Heart right ventricle (tissue), 16 donors: ENCODE measurements at regions of chr18 and their contacts with region 1.

Region 1: DNA sequence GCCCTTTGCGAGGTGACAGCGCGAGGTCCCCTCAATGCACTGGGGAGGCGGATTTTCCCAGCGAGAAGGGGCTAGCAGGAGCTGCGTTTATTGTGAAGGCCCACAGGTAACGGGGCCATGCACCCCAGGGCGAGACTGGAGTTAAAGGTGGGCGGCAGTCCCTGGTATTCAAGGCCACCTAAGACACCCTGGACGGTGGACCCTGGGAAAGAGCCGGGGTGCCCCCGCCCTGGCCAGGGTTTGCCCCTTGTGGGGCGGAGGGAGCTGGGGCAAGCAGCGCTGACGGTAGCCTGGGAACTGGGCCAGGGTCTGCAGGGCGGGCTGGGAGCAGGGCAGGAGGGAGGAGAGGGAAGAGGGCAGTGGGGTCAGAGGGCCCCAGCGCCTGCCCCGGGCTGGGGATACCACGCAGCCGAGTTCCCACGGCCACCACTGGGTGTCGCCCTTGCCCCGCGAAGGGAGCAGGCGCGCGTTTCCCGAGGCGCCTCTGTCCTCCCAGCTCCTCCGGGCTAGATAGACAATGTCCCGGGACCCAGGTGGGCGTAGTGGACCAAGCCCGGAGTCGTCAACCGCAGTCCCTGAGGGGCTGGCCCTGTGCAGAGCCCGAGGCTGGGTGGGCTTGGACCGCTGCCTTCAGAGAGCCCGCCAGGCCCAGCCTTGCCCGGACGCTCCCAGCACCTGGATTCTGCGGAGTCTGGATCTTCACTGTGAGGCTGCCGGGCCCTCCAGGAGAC is 80.2 kb downstream of the SMAD4 start:
- DNase-seq: peak; percentile 48 to 76
- ATAC-seq: peak; percentile 89 to 96 (median 94)
- H3K4me3 ChIP-seq: peak overlapping the region in 2 of 10 donors; percentile 8 to 21
- H3K27ac ChIP-seq: no peak overlapping the region
- H3K4me1 ChIP-seq: peaks cover 0 to 11% (median 4%) of the 10 kb centered on the region in 9 donors
- H3K27me3 ChIP-seq: no peaks in the 10 kb centered on the region
- CTCF ChIP-seq: peak; percentile 89 to 100 (median 95)

Region 2: GRCh38 chr18:51383116-51383515 is 272.9 kb after region 1 on chr18:
- intact Hi-C with region 1: loop called in 9 of 10 experiments (anchors 1 to 10 kb)
- DNase-seq: no peak
- ATAC-seq: no peak
- H3K4me3 ChIP-seq: no peak overlapping the region
- H3K27ac ChIP-seq: no peak overlapping the region
- H3K4me1 ChIP-seq: no peaks in the 10 kb centered on the region
- H3K27me3 ChIP-seq: no peaks in the 10 kb centered on the region
- CTCF ChIP-seq: no peak

Region 3: GRCh38 chr18:51390702-51391101 is 280.5 kb after region 1 on chr18:
- intact Hi-C with region 1: loop called in 4 of 10 experiments (anchors 2 to 10 kb)
- DNase-seq: no peak
- ATAC-seq: no peak
- H3K4me3 ChIP-seq: no peak overlapping the region
- H3K27ac ChIP-seq: no peak overlapping the region
- H3K4me1 ChIP-seq: no peaks in the 10 kb centered on the region
- H3K27me3 ChIP-seq: peaks cover 0 to 11% (median 0%) of the 10 kb centered on the region in 7 donors
- CTCF ChIP-seq: no peak

Region 4: GRCh38 chr18:51537487-51537886 is 427.2 kb after region 1 on chr18:
- intact Hi-C with region 1: loop called in 5 of 10 experiments (anchors 2 to 10 kb)
- DNase-seq: peak; percentile 17 to 36
- ATAC-seq: peak in 5 of 8 donors; percentile 75 to 88 (median 77)
- H3K4me3 ChIP-seq: no peak overlapping the region
- H3K27ac ChIP-seq: no peak overlapping the region
- H3K4me1 ChIP-seq: no peaks in the 10 kb centered on the region
- H3K27me3 ChIP-seq: no peaks in the 10 kb centered on the region
- CTCF ChIP-seq: peak in 7 of 9 donors; percentile 24 to 60 (median 43)

Region 5: DNA sequence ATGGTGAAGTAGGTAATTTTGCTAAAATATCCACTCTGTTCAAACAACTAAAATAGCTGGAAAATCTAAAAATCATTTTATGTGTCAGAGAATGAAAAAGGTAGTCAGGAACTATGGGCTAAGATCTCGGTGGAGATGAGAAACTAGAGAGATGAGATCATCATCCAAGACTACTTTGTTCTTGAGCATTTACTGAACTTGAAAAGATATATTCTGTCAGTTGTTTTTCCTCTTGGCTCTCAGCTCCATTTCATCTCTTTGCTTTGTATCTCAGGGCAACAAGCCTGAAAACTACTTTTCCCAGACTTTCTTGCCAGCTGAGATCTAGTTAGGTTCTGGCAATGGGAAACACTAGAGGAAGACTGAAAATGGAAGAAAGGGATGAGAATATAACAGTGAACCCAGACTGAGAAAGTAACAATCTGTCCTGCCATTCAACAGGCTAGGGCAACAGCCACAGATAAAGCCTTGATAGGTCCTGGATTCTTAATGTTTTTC is 433.5 kb after region 1 on chr18:
- intact Hi-C with region 1: loop called in 4 of 10 experiments (anchors 5 to 10 kb)
- DNase-seq: no peak
- ATAC-seq: no peak
- H3K4me3 ChIP-seq: no peak overlapping the region
- H3K27ac ChIP-seq: no peak overlapping the region
- H3K4me1 ChIP-seq: no peaks in the 10 kb centered on the region
- H3K27me3 ChIP-seq: no peaks in the 10 kb centered on the region
- CTCF ChIP-seq: no peak